CD4-positive, alpha-beta T cell (primary cell): ENCODE measurements at regions of chr16 and their contacts with region 1.

Region 1: DNA sequence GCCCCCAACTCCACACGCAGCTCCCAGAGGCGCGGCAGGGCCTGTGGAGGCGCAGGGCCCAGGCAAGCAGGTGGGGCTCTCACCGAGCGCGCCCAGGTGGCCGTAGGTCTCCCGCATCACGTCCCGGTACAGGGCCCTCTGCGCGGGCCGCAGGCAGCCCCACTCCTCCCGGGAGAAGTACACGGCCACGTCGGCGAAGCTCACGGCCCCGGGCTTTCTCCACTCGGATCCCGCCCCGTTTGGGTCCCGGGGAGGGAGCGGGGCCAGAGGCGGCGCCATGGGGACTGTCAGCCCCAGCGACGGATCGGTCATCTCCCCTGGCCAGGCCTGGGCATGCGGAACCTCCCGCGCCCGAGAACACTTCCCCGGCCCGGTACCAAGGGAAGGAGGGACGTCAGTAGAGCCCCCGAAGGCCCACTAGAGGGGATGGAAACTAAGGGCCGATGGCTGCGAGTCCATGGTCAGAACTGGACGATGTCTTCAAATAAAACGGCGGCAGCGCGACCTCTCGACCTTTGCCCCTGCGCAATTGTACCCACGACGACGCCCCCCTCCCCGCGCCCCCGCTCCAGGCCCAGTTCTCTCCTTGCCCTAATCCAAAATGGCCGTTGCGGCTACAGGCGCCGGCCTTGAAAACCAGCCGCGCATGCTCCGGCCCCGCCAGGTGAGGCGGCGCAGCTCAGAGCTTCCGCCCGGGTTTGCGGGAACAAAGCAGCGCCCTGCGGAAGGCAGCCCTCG is at the start of gene ZNF747:
- DNase-seq: peak; percentile 88 to 95 (median 92)
- ATAC-seq: peak; percentile 80
- H3K4me3 ChIP-seq: peak within 1 kb of the TSS; percentile 87
- H3K4me3 Mint-ChIP-seq: peak within 1 kb of the TSS; percentile 94
- H3K27ac ChIP-seq: peak within 1 kb of the TSS; percentile 85 to 96
- H3K27ac Mint-ChIP-seq: peak within 1 kb of the TSS; percentile 99
- H3K4me1 ChIP-seq: peaks cover 52% of the 10 kb centered on the region
- H3K4me1 Mint-ChIP-seq: peaks cover 43% of the 10 kb centered on the region
- H3K27me3 ChIP-seq: no peaks in the 10 kb centered on the region
- H3K27me3 Mint-ChIP-seq: no peaks in the 10 kb centered on the region
- CTCF ChIP-seq: no peak
- total RNA-seq, gene ZNF747: 6.3 to 6.7 TPM

Region 2: GRCh38 chr16:30551781-30552180 is 17.2 kb after region 1 on chr16:
- CTCF ChIA-PET with region 1: interaction called, 68 read pairs
- POLR2A ChIA-PET with region 1: interaction called, 116 read pairs
- intact Hi-C with region 1: loop called in 1 of 2 experiments (anchors 2 kb)
- DNase-seq: peak; percentile 32 to 93 (median 64)
- ATAC-seq: peak; percentile 86
- H3K4me3 ChIP-seq: peak overlapping the region; percentile 22
- H3K4me3 Mint-ChIP-seq: peak overlapping the region; percentile 79
- H3K27ac ChIP-seq: peak overlapping the region; percentile 48 to 56
- H3K27ac Mint-ChIP-seq: peak overlapping the region; percentile 89
- H3K4me1 ChIP-seq: peaks cover 68% of the 10 kb centered on the region
- H3K4me1 Mint-ChIP-seq: peaks cover 50% of the 10 kb centered on the region
- H3K27me3 ChIP-seq: no peaks in the 10 kb centered on the region
- H3K27me3 Mint-ChIP-seq: no peaks in the 10 kb centered on the region
- CTCF ChIP-seq: no peak

Region 3: DNA sequence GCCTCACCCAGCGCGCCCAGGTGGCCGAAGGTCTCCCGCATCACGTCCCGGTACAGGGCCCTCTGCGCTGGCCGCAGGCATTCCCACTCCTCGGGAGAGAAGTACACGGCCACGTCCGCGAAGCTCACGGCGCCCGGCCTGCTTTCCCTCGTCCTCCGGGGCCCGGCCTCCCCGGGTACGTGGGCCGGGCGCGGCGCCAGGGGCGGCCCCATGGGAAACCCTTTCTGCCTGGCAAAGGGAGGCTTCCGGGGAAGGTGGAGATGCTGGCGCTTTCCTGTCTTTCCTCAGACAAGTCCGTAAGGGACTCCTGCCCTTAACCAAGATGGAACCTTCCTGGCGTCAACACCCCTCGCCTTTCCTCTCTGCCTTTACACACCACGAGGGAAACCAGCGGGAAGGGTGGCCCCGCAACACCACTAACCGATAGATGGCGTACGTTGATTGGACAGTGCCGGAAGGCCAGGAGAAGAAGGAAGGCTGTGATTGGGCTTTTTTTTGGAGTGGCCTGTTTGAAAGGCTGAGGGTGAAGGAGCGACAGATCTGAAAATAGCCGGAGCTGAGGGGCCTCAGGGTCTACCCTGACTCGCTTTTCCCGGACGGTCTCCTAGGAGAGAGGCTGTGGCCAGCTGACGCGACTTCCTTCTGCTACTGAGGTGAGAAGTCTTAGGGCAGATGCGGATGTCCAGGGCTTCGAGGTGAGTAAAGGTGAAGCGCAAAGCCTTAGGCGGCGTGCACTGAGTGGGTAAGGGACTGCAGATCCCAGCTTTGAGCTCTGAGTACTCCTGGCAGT is 51.1 kb after region 1 on chr16 and contains the start of gene ZNF785:
- CTCF ChIA-PET with region 1: interaction called, 11 read pairs
- POLR2A ChIA-PET with region 1: interaction called, 7 read pairs
- intact Hi-C with region 1: loop called in 1 of 2 experiments (anchors 1 kb)
- DNase-seq: peak; percentile 81 to 97 (median 87)
- ATAC-seq: peak; percentile 99
- H3K4me3 ChIP-seq: peak within 1 kb of the TSS; percentile 64
- H3K4me3 Mint-ChIP-seq: peak within 1 kb of the TSS; percentile 92
- H3K27ac ChIP-seq: peak within 1 kb of the TSS; percentile 53 to 57
- H3K27ac Mint-ChIP-seq: peak within 1 kb of the TSS; percentile 93
- H3K4me1 ChIP-seq: peaks cover 26% of the 10 kb centered on the region
- H3K4me1 Mint-ChIP-seq: peaks cover 18% of the 10 kb centered on the region
- H3K27me3 ChIP-seq: no peaks in the 10 kb centered on the region
- H3K27me3 Mint-ChIP-seq: no peaks in the 10 kb centered on the region
- CTCF ChIP-seq: no peak
- total RNA-seq, gene ZNF785: 6.6 to 7.7 TPM

Region 4: DNA sequence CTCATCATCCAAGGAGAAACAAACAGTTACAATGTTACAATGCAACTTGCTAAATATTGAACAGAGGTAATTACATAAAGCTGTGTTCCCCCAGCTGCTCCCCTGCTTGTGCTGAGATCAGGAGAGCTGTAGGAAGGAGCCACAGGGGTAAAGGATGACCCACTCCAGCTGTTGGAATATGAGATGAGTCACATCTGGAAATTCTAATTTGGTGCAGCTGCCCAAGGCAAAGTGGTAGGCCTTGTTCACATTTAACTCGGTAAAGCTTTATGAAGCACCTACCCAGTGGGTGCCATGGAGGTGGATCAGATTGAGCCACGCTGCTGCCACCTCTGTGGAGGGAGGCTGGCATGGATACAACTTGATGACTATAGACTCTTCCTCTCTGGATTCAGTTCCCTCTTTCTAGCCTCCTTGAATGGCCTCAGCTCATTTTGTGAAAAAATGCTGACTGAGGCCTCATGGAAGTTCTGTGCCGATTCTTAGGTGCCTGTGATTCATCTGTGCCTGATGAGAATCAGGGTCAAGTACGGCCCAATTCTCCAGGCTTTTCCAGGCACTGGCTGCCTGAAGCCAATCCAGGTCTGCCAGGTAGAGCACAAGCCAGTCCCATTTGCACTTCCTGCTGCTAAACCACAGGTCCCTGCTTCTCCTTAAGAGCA is 68.2 kb after region 1 on chr16:
- CTCF ChIA-PET with region 1: interaction called, 17 read pairs
- POLR2A ChIA-PET with region 1: interaction called, 5 read pairs
- intact Hi-C with region 1: loop called in 1 of 2 experiments (anchors 5 kb)
- DNase-seq: peak in 2 of 14 experiments; percentile 20 to 26
- ATAC-seq: no peak
- H3K4me3 ChIP-seq: no peak overlapping the region
- H3K4me3 Mint-ChIP-seq: no peak overlapping the region
- H3K27ac ChIP-seq: no peak overlapping the region
- H3K27ac Mint-ChIP-seq: no peak overlapping the region
- H3K4me1 ChIP-seq: peaks cover 7% of the 10 kb centered on the region
- H3K4me1 Mint-ChIP-seq: peaks cover 9% of the 10 kb centered on the region
- H3K27me3 ChIP-seq: no peaks in the 10 kb centered on the region
- H3K27me3 Mint-ChIP-seq: no peaks in the 10 kb centered on the region
- CTCF ChIP-seq: no peak

Region 5: GRCh38 chr16:30609926-30610839 is 75.6 kb after region 1 on chr16 and contains the start of gene ZNF689:
- CTCF ChIA-PET with region 1: interaction called, 9 read pairs
- POLR2A ChIA-PET with region 1: interaction called, 7 read pairs
- intact Hi-C with region 1: loop called in 1 of 2 experiments (anchors 2 kb)
- DNase-seq: peak; percentile 88 to 97 (median 94)
- ATAC-seq: peak; percentile 92
- H3K4me3 ChIP-seq: peak within 1 kb of the TSS; percentile 74
- H3K4me3 Mint-ChIP-seq: peak within 1 kb of the TSS; percentile 91
- H3K27ac ChIP-seq: peak within 1 kb of the TSS; percentile 86 to 89
- H3K27ac Mint-ChIP-seq: peak within 1 kb of the TSS; percentile 93
- H3K4me1 ChIP-seq: peaks cover 26% of the 10 kb centered on the region
- H3K4me1 Mint-ChIP-seq: peaks cover 23% of the 10 kb centered on the region
- H3K27me3 ChIP-seq: no peaks in the 10 kb centered on the region
- H3K27me3 Mint-ChIP-seq: no peaks in the 10 kb centered on the region
- CTCF ChIP-seq: no peak
- total RNA-seq, gene ZNF689: 15.3 to 15.7 TPM

Region 6: DNA sequence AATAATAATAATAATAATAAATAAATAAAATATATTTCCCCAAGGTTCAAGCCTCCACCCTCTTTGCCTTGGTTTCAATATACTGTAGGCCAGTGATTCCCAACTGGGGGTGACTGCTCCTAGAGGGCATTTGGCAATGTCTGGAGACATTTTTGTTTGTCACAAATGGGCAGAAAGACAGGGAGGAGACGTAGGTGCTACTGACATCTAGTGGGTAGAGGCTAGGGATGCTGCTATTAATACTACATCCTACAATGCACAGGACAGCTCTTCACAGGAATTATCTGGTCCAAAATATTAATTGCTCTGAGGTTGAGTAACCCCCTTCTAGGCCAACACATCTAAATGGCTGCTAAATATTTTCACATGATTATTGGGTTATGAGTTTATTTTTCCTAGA is 103.4 kb after region 1 on chr16:
- CTCF ChIA-PET with region 1: interaction called, 4 read pairs
- POLR2A ChIA-PET with region 1: interaction called, 9 read pairs
- intact Hi-C with region 1: loop called in 1 of 2 experiments (anchors 5 kb)
- DNase-seq: peak in 4 of 14 experiments; percentile 19 to 75 (median 63)
- ATAC-seq: peak; percentile 17
- H3K4me3 ChIP-seq: no peak overlapping the region
- H3K4me3 Mint-ChIP-seq: peak overlapping the region; percentile 48
- H3K27ac ChIP-seq: no peak overlapping the region
- H3K27ac Mint-ChIP-seq: no peak overlapping the region
- H3K4me1 ChIP-seq: peaks cover 19% of the 10 kb centered on the region
- H3K4me1 Mint-ChIP-seq: peaks cover 17% of the 10 kb centered on the region
- H3K27me3 ChIP-seq: no peaks in the 10 kb centered on the region
- H3K27me3 Mint-ChIP-seq: no peaks in the 10 kb centered on the region
- CTCF ChIP-seq: peak; percentile 24